ENCODE measurements at regions of chr14 and their contacts with region 1.

Region 1: DNA sequence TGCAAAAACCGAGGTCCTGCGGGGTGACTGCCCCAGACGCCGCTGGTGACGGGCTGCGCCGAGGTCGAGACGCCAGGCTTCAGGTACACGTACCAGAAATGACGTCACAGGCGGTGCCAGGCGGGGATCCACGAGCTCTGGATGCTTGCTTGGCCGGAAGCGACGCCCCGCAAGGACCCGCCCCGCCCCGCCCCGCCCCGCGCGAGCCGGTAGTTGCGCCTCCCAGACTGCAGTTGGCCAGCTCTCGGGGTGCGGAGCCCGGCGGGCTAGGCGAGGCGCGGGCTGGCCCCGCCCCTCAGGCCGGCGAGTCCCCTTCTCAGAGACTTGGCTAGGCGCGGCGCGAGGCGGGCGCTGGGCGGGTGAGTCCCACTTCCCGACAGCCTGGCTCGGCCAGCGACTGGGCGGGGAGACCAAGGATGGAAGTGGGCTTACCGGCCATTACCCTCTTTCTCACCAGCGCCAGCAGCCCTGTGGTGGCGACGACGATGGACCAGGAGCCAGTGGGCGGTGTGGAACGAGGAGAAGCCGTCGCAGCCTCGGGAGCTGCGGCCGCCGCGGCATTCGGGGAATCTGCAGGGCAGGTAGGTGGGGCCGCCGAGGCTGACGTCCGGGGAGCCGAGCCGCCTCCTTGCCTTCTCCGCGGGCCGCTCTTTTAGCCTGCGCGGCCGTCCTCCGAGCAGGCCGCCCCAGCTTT is at the start of gene FAM177A1:
- DNase-seq: peak; percentile 99
- H3K4me3 Mint-ChIP-seq: peak within 1 kb of the TSS; percentile 96
- H3K27ac Mint-ChIP-seq: peak within 1 kb of the TSS; percentile 99
- H3K4me1 Mint-ChIP-seq: peaks cover 28% of the 10 kb centered on the region
- H3K27me3 Mint-ChIP-seq: no peaks in the 10 kb centered on the region
- total RNA-seq, gene FAM177A1: 37.9 and 41.6 TPM in 2 replicates

Region 2: DNA sequence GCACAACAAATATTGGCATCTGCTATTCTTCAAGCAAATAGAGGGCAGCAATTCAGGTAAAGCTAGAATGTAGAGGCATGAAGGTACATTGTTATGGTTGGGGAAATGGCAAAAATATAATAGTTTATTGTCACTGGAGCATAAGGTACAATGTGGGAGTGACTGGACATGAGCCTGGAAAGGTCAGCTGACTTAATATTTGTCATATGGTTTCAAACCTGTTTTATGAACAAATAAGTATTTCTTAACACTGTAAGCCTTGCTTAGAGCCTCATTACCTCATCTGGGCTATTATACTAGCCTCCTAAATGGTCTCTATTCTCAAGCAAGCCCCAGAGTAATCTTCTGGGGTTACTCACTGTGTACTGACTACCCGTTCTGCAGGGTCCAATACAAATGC is 33.5 kb after region 1 on chr14:
- intact Hi-C with region 1: no loop called
- DNase-seq: no peak
- H3K4me3 Mint-ChIP-seq: no peak overlapping the region
- H3K27ac Mint-ChIP-seq: no peak overlapping the region
- H3K4me1 Mint-ChIP-seq: no peaks in the 10 kb centered on the region
- H3K27me3 Mint-ChIP-seq: no peaks in the 10 kb centered on the region

Region 3: GRCh38 chr14:35121887-35122695 is 75.9 kb after region 1 on chr14 and contains the starts of genes PPP2R3C and PRORP:
- intact Hi-C with region 1: loop called (anchors 1 kb)
- DNase-seq: peak; percentile 97
- H3K4me3 Mint-ChIP-seq: peak within 1 kb of the TSS; percentile 82
- H3K27ac Mint-ChIP-seq: peak within 1 kb of the TSS; percentile 100
- H3K4me1 Mint-ChIP-seq: peaks cover 56% of the 10 kb centered on the region
- H3K27me3 Mint-ChIP-seq: no peaks in the 10 kb centered on the region
- total RNA-seq, gene PPP2R3C: 51.6 and 58.1 TPM in 2 replicates
- total RNA-seq, gene PRORP: 35.6 and 41.1 TPM in 2 replicates

Region 4: GRCh38 chr14:35180179-35180578 is 134.0 kb after region 1 on chr14:
- intact Hi-C with region 1: no loop called
- DNase-seq: no peak
- H3K4me3 Mint-ChIP-seq: no peak overlapping the region
- H3K27ac Mint-ChIP-seq: no peak overlapping the region
- H3K4me1 Mint-ChIP-seq: peaks cover 5% of the 10 kb centered on the region
- H3K27me3 Mint-ChIP-seq: no peaks in the 10 kb centered on the region

Region 5: GRCh38 chr14:35398071-35398632 is 352.0 kb after region 1 on chr14:
- intact Hi-C with region 1: no loop called
- DNase-seq: no peak
- H3K4me3 Mint-ChIP-seq: no peak overlapping the region
- H3K27ac Mint-ChIP-seq: peak overlapping the region; percentile 70
- H3K4me1 Mint-ChIP-seq: peaks cover 42% of the 10 kb centered on the region
- H3K27me3 Mint-ChIP-seq: no peaks in the 10 kb centered on the region